Right cardiac atrium (tissue), 5 donors: ENCODE measurements at regions of chr15 and their contacts with region 1.

Region 1: DNA sequence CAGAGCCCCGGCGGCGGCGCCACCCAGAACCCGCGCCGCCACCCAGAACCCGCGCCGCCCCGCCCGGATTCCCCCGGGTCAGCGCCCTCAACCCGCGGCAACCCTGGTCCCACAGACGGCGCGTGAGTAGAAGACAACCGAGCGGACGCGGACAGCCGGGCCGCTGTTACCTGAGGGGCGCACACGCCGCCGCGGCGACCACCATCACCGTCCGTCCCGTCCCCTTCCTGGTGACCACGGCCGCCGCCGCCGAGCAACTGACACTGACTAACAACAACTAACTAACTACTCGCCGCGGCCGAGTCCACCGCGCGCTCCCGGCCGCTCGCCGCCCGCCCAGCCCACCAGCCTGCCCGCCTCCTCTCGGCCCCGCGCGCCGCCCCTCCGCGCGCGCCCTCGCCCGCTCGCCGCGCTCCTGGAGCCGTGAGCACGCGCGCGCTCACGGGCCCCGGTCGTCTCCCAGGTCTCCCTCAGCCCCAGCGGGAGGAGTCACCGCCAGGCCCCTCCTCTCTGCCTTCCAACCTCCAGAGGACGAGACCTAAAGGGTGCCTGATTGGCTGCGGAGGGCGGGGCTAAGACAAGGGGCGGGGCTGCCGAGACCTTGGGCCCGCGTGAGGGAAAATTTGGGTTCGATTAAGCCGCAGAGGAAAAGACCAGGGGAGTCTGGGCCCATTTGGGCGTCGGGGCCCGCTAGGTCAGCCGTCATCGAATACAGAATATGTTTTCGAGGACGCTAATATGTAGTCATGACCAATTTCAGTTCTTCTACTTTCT is at the start of gene PEAK1:
- DNase-seq: peak; percentile 100
- ATAC-seq: peak; percentile 98 to 99
- H3K4me3 ChIP-seq: peak within 1 kb of the TSS; percentile 87
- H3K27ac ChIP-seq: peak within 1 kb of the TSS; percentile 100
- H3K4me1 ChIP-seq: peaks cover 5% of the 10 kb centered on the region
- H3K27me3 ChIP-seq: no peaks in the 10 kb centered on the region
- total RNA-seq, gene PEAK1: 71.7 to 97.3 (median 91.3) TPM

Region 2: DNA sequence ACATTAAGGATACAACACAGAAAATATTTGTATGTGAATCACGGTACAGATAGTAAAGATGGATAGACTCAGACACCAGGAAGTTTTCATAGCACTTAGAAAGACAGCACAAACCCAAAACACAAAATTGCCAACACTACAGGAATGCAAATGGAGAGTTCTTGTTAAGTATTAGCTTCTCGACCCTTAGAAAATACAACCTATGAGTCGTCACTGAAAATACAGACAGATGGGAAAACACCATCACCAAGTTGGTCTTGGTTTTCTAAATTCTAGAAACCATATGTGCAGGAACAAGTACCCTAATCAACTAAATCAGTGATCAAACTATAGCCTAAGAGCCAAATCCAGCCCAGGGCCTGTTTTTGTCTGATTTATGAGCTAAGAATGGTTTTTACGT is 50.9 kb before region 1 on chr15:
- intact Hi-C with region 1: no loop called
- DNase-seq: no peak
- ATAC-seq: no peak
- H3K4me3 ChIP-seq: no peak overlapping the region
- H3K27ac ChIP-seq: no peak overlapping the region
- H3K4me1 ChIP-seq: no peaks in the 10 kb centered on the region
- H3K27me3 ChIP-seq: no peaks in the 10 kb centered on the region

Region 3: GRCh38 chr15:77482570-77482969 is 62.5 kb after region 1 on chr15:
- intact Hi-C with region 1: loop called in 1 of 4 experiments (anchors 10 kb)
- DNase-seq: no peak
- ATAC-seq: peak in 1 of 2 donors; percentile 27
- H3K4me3 ChIP-seq: no peak overlapping the region
- H3K27ac ChIP-seq: no peak overlapping the region
- H3K4me1 ChIP-seq: peaks cover 7% of the 10 kb centered on the region
- H3K27me3 ChIP-seq: no peaks in the 10 kb centered on the region

Region 4: GRCh38 chr15:77496710-77497103 is 76.7 kb after region 1 on chr15:
- intact Hi-C with region 1: loop called in 2 of 4 experiments (anchors 5 to 10 kb)
- DNase-seq: peak; percentile 89 to 96 (median 94)
- ATAC-seq: peak; percentile 88 to 89
- H3K4me3 ChIP-seq: no peak overlapping the region
- H3K27ac ChIP-seq: peak overlapping the region; percentile 99
- H3K4me1 ChIP-seq: peaks cover 26% of the 10 kb centered on the region
- H3K27me3 ChIP-seq: no peaks in the 10 kb centered on the region